HepG2 (cell line): ENCODE measurements at regions of chr12 and their contacts with region 1.

Region 1: DNA sequence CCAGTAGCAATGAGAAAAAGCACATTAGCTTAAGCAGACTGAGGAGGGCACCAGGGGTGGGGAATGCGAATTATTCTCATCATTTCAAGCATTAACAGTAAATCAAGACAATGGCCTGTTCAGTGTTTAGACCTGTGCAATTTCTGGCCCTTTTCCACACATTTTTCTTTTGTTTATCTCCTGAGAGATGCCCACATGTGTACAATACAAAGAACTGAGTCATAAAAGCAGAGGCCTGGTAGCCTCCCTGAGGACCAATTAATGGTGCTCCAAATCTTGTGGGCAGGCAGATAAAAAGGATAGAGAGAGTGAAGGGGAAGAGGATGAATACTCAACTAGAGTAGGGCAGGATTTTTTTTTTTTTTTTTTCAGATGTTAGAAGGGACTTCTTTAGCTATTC is 480.8 kb downstream of the RERGL start:
- DNase-seq: no peak
- ATAC-seq: no peak
- H3K4me3 ChIP-seq: no peak overlapping the region
- H3K27ac ChIP-seq: no peak overlapping the region
- H3K4me1 ChIP-seq: no peaks in the 10 kb centered on the region
- H3K27me3 ChIP-seq: no peaks in the 10 kb centered on the region; a peak in 1 of 5 replicates
- CTCF ChIP-seq: no peak
- EP300 ChIP-seq: no peak
- POLR2A ChIP-seq: no peak
- RAD21 ChIP-seq: no peak

Region 2: DNA sequence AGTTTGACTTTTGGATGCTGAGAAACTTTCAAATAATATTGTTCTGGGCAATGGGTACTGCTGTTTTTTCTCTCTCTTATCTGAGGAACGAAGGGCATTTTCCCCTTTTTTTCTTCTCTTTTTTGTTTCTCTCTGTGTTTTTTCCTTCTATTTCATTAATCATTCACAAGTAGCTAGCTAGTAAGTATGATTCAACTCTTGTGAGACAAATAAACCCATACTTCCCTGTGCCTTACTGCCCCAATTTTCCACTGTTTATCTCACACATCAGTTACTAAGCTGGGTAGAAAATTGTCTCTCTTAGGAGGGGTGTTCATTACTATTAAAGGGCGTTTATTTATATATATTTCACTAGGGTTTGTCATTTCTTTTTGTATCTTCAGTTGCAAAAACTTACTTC is 43.3 kb after region 1 on chr12:
- CTCF ChIA-PET with region 1: no interaction called
- POLR2A ChIA-PET with region 1: no interaction called
- in situ Hi-C with region 1: no loop called
- intact Hi-C with region 1: loop called (anchors 2 kb)
- DNase-seq: no peak
- ATAC-seq: no peak
- H3K4me3 ChIP-seq: no peak overlapping the region
- H3K27ac ChIP-seq: no peak overlapping the region
- H3K4me1 ChIP-seq: no peaks in the 10 kb centered on the region
- H3K27me3 ChIP-seq: no peaks in the 10 kb centered on the region
- CTCF ChIP-seq: no peak
- EP300 ChIP-seq: no peak
- POLR2A ChIP-seq: no peak
- RAD21 ChIP-seq: no peak

Region 3: DNA sequence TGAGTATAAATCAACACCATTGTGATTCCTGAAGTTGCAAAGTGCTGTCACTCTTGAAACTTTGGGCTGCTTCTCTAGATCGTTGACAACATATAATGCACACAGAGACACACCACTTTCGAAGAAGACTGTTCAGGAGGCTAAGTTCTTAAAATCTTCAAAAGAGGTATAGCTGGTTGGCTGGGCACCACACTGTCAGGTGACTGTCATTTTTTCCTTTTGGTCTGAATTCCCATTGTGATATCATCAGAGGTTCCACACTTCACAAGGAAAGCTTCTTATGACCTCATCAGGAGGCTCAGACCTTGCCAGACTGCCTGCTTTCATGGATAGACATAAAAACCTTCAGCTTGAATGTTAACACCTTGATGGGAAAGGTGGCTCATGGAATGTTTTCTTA is 1128.7 kb after region 1 on chr12 and contains the starts of genes CAPZA3 and PLCZ1:
- CTCF ChIA-PET with region 1: no interaction called
- POLR2A ChIA-PET with region 1: no interaction called
- in situ Hi-C with region 1: no loop called
- intact Hi-C with region 1: no loop called
- DNase-seq: no peak
- ATAC-seq: no peak
- H3K4me3 ChIP-seq: no peak within 1 kb of the TSS
- H3K27ac ChIP-seq: no peak within 1 kb of the TSS
- H3K4me1 ChIP-seq: no peaks in the 10 kb centered on the region
- H3K27me3 ChIP-seq: no peaks in the 10 kb centered on the region
- CTCF ChIP-seq: no peak
- EP300 ChIP-seq: no peak
- POLR2A ChIP-seq: no peak
- RAD21 ChIP-seq: no peak
- total RNA-seq, gene CAPZA3: not detected in 2 replicates
- total RNA-seq, gene PLCZ1: not detected in 2 replicates